ENCODE measurements at regions of chr1 and their contacts with region 1.

Region 1: GRCh38 chr1:67771152-67771551 is 62.1 kb downstream of the GNG12 start:
- DNase-seq: no peak
- ATAC-seq: peak; percentile 74
- H3K4me3 ChIP-seq: no peak overlapping the region
- H3K4me1 ChIP-seq: no peaks in the 10 kb centered on the region
- CTCF ChIP-seq: no peak

Region 2: DNA sequence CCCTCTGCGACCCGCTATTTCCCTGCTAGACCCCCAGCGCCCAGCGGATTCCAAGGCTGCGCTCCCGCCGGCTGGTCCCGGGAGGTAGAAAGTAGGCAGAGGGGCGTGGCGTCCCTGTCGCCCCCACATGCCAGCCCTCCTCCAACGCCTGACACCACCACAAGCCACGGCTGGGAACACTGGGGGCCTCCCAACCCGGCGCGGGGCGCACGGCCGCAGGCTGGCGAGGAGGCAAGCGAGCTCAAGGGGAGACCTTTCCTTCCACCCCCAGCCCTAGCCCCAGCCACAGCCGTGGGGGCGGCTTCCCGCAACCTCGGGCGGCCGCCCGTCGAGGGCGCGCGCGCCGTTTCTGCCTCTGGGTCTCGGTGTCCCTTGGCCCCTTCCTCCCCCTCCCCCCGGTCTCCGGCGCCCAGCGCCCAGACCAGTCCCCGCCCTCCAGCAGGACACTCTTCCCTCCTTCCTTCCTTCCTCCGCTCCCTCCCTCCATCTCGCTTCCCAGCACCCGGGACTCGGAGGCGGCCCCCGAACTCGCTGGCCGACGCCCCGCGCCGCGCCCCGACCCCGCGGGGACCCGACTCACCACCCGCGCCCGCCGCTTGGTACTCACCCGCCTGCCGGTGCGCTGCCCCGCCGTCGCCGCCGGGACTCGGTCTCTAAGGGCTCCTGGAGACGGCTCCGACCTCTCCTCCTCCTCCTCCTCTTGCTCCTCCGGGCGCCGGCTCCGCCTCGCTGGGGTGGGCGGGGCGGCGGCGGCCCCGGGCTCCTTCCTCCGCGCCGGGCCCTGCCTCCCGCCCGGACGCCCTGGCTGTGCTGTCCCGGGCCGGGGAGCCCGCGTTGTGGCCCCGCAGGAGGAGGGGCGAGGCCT is 61.8 kb after region 1 on chr1 and contains the start of gene GNG12:
- intact Hi-C with region 1: loop called in 1 of 2 experiments (anchors 10 kb)
- DNase-seq: peak; percentile 77 to 85 (median 77)
- ATAC-seq: peak; percentile 92
- H3K4me3 ChIP-seq: peak within 1 kb of the TSS; percentile 81
- H3K4me1 ChIP-seq: peaks cover 26% of the 10 kb centered on the region
- CTCF ChIP-seq: no peak
- total RNA-seq, gene GNG12: 85.0 to 191 (median 158) TPM

Region 3: GRCh38 chr1:67853704-67854103 is 82.6 kb after region 1 on chr1:
- intact Hi-C with region 1: no loop called
- DNase-seq: peak; percentile 50 to 80 (median 73)
- ATAC-seq: peak; percentile 69
- H3K4me3 ChIP-seq: no peak overlapping the region
- H3K4me1 ChIP-seq: peaks cover 3% of the 10 kb centered on the region
- CTCF ChIP-seq: peak; percentile 52